A673 (cell line): ENCODE measurements at regions of chr15 and their contacts with region 1.

Region 1: DNA sequence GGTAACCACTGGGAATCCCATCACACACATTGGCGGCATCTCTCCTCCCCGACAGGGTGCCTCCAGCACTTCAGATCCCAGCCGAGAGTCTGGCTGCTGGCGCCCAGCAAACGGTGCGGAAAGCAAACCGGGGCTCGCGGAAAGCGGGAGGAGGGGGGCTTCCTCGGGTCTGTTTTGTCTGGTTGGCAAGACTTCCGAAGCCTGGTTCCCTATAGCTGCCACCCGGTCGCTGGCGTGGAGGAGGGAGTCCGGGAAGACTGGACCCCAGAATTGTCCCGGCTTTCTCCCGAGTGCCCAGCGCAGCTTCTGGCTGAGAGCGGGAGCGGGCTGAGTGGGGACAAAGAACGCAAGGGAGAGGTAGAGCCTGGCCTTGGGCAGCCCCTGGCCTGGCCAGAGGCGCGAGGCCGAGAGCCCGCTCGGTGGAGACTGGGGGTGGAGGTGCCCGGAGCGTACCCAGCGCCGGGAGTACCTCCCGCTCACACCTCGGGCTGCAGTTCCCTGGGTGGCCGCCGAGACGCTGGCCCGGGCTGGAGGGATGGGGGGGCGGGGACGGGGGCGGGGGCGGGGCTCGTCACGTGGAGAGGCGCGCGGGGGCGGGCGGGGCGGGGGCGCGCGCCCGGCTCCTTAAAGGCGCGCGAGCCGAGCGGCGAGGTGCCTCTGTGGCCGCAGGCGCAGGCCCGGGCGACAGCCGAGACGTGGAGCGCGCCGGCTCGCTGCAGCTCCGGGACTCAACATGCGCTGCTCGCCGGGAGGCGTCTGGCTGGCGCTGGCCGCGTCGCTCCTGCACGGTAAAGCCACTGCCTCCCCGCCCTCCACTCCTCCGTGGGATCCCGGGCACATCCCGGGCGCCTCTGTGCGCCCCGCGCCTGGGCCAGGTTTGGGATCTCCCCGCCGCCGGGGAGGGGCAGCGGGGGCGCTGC is at the start of gene CHRNA7:
- DNase-seq: peak; percentile 73
- H3K4me3 ChIP-seq: peak within 1 kb of the TSS; percentile 53
- H3K27ac ChIP-seq: no peak within 1 kb of the TSS
- H3K4me1 ChIP-seq: peaks cover 5% of the 10 kb centered on the region
- H3K27me3 ChIP-seq: peaks cover 12% of the 10 kb centered on the region
- CTCF ChIP-seq: 0 out of 2 replicates have a peak, but pooled peaks have one; percentile 24
- total RNA-seq, gene CHRNA7: 3.3 and 3.7 TPM in 2 replicates

Region 2: DNA sequence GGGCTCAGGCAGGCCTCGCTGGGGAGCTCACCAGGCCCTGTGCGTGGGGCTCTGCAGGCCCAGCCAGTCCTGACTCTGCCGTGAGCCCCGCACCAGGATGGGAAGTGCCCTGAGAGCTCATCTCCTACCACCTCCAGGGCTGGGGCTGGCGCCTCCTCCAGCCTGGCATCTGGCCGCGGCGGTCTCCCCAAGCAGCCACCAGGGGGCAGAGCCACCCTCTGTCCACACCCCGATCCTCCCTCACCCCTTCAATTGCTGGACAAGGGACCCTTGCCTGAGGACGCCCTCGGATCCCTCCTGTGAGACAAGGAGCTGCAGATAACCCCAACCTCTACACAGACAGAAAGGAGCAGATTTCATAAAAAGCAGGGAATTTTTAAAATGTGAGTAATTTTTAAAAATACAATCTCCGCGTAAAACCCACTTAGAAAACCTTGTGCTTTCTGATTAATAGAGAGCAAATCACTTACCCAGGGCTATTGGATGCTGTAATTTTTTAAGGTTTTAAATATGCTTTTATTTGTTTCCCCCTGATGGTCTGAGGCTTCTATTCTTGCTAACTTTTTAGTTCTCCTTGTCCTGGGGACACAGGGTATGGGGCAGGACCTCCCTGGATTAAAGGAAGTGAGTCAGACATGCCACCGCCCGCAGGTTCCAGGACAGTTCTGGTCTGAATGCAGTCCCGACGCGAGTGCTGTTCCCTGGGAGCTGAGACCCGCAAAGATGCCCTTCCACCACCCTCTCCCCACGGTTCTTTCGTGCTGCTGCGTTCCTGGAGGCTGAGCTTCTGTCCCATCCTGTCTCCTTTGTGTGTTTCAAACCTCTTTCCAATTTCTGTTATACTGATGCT is 52.1 kb before region 1 on chr15:
- CTCF ChIA-PET with region 1: interaction called, 4 read pairs
- POLR2A ChIA-PET with region 1: no interaction called
- intact Hi-C with region 1: loop called (anchors 5 kb)
- DNase-seq: peak; percentile 52
- H3K4me3 ChIP-seq: no peak overlapping the region
- H3K27ac ChIP-seq: no peak overlapping the region
- H3K4me1 ChIP-seq: no peaks in the 10 kb centered on the region
- H3K27me3 ChIP-seq: no peaks in the 10 kb centered on the region
- CTCF ChIP-seq: peak; percentile 83

Region 3: GRCh38 chr15:32089851-32090359 is 59.8 kb after region 1 on chr15:
- CTCF ChIA-PET with region 1: no interaction called
- POLR2A ChIA-PET with region 1: interaction called, 10 read pairs
- intact Hi-C with region 1: no loop called
- DNase-seq: no peak
- H3K4me3 ChIP-seq: no peak overlapping the region
- H3K27ac ChIP-seq: no peak overlapping the region
- H3K4me1 ChIP-seq: no peaks in the 10 kb centered on the region
- H3K27me3 ChIP-seq: no peaks in the 10 kb centered on the region
- CTCF ChIP-seq: no peak